Activated CD4-positive, alpha-beta memory T cell treated with anti-CD3 and anti-CD28 coated beads, Interleukin-2, amount 10 ng/mL, durations not matched to agents 7 days and 5 days (primary cell): ENCODE measurements at regions of chr1 and their contacts with region 1.

Region 1: GRCh38 chr1:156728597-156729462 is at the start of gene ISG20L2:
- DNase-seq: peak; percentile 98
- H3K4me3 Mint-ChIP-seq: no peak within 1 kb of the TSS
- H3K27ac Mint-ChIP-seq: no peak within 1 kb of the TSS
- H3K4me1 Mint-ChIP-seq: peaks cover 24% of the 10 kb centered on the region
- H3K27me3 Mint-ChIP-seq: no peaks in the 10 kb centered on the region
- total RNA-seq, gene ISG20L2: 42.0 to 43.3 TPM

Region 2: DNA sequence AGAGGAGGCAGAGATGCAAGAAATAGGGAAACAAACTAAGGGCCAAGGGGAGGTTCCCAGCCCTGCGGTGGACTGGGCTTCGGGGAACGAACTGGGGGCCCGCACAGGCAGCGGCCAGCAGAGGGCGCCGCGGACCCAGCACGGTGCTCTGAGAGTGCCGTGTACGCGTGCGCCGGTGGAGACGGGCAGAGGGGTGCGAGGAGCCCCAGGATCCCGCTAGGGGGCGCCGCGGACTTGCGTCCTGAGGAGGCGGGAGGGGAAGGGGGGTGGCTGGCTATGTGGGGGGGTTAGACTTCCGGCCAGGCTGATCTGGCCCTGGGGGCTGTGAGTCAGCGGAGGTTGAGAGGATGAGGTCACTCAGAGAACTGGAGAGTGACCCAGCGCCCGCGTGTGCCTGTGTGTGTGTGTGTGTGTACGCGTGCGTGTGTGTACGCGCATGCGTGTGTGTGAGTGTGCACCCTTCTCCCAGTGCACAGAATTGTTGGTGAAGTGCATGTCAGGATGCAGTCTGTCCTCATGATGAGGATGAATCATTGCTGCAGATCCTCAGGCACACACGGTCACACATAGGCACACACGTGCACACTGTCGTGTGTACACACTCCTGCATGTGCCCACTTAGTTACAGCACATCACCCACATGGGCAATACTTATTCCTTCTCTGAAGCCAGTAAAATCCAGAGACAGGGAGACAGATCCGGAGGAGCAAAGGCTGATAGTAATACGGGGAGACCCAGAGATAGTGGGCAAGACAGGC is 68.7 kb before region 1 on chr1:
- CTCF ChIA-PET with region 1: interaction called, 77 read pairs
- POLR2A ChIA-PET with region 1: interaction called, 17 read pairs
- DNase-seq: peak; percentile 95
- H3K4me3 Mint-ChIP-seq: peak overlapping the region; percentile 83
- H3K27ac Mint-ChIP-seq: peak overlapping the region; percentile 86
- H3K4me1 Mint-ChIP-seq: peaks cover 72% of the 10 kb centered on the region
- H3K27me3 Mint-ChIP-seq: peaks cover 30% of the 10 kb centered on the region

Region 3: DNA sequence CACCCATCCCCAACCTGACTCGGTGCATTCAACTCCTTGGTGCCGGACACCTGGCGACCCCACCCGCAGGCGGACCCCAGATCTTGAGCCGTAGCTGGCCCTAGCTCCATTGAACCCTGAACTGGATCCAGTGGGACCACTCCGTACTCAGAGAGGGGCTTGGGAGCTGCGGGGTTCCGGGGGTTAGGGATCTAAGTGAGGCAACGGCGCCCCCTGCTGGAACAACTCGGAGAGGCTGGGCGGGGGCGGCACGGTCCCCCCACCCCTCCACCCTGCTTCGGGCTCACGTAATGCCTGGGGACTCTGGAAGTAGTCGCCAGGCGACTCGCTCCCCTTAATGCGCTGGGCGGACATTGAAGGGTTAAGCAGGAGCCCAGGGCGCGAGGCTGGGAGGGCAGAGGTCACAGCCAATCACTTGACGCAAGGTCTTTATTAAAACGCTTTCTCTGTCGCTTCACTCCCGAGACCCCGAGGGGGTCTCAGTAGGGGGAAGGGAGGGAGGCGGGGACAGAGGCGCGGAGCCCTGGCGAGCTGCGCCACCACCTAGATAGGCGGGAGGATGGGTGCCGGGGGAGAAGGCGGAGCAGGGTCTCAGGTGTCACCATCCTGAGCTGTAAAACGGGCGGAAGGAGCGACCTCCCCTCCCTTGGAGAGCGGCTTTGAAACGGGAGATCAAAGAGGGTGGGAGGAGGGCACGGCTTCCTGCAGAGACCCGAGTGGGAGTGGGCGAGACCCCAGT is 22.7 kb before region 1 on chr1:
- CTCF ChIA-PET with region 1: interaction called, 34 read pairs
- POLR2A ChIA-PET with region 1: interaction called, 10 read pairs
- DNase-seq: peak; percentile 69
- H3K4me3 Mint-ChIP-seq: peak overlapping the region; percentile 70
- H3K27ac Mint-ChIP-seq: no peak overlapping the region
- H3K4me1 Mint-ChIP-seq: peaks cover 21% of the 10 kb centered on the region
- H3K27me3 Mint-ChIP-seq: peaks cover 38% of the 10 kb centered on the region

Region 4: DNA sequence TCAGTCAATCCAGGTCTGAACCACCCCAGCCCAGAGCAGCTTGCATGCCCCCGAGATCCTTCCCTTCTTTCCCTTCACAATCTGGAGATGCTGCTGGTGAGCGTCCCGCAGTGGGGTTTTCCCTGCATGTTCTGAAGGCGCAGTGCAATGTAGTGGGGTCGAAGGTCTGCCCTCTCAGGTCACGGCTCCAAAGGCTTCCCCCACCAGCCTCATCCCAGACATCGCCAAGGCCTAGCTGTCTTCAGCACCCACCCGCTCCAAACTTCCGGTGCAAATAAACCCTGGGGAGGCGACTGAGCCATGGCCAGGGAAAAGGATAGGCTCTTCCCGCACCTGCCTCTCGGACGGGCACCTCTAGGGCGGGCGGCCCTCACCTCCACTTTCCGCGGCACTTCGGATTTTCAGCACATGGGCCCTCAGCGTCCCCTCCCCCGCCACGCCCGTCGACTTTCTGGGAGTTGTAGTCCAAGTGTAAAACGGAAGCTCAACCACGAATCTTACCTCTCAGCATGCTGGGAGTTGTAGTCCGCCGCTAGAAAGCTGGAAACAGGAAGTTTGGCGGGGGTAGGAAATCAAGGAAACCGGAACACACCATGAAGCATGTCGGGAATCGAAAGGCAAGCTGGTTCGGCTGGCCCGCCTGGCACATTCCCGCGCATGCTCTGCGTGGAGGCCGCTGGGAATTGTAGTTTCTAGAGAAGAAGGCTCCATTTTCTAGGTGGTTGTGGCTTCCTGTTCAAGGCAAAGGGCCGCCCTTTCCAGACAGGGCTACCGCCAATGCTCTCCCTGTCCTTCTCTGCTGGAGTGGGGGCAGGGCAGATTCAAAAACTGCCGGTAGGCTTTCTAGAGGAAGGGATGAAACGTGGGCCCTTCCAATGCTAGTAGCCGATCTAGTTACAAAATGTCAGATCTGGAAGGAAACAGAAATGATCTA is 12.1 kb after region 1 on chr1 and contains the start of gene MRPL24:
- CTCF ChIA-PET with region 1: interaction called, 78 read pairs
- POLR2A ChIA-PET with region 1: interaction called, 150 read pairs
- DNase-seq: peak; percentile 98
- H3K4me3 Mint-ChIP-seq: peak within 1 kb of the TSS; percentile 99
- H3K27ac Mint-ChIP-seq: peak within 1 kb of the TSS; percentile 97
- H3K4me1 Mint-ChIP-seq: peaks cover 66% of the 10 kb centered on the region
- H3K27me3 Mint-ChIP-seq: no peaks in the 10 kb centered on the region
- total RNA-seq, gene MRPL24: 40.3 to 43.8 TPM

Region 5: DNA sequence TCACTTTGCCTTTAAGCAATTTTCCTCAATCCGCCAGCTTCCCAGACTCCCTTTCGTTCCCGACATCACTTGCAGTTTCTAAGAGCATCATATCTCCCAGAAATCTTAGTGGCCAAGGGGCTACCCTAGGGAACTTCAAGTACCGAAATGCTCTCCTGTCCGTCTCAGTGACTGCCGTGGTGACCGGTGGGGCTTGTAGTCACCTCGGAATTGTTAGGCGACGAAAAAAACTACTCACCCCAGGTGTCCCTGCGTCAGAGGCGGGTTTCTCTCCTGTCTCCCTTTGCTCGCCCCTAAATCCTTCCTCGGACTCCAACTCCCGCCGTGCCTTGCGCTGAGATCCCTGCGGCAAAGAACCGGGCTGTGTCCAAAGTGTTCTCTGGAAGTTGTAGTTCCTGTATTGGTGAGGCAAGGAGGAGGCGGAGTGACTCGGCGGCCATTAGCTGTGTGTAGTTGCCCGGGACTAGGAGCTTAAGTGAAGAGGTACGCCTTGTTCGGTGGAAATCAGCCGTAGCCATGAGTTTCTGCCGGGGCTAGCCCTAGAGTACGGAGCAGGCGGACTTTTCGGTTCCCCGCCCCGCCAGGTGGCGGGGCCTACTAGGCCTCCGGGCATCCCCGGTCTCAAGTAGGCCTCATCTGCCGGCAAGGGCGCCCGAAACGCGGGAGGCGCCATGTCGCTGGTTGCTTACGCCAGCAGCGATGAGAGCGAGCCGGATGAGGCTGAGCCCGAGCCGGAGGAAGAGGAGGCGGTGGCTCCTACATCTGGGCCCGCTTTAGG is 38.5 kb after region 1 on chr1 and contains the start of gene PRCC:
- CTCF ChIA-PET with region 1: interaction called, 121 read pairs
- POLR2A ChIA-PET with region 1: interaction called, 72 read pairs
- DNase-seq: peak; percentile 99
- H3K4me3 Mint-ChIP-seq: no peak within 1 kb of the TSS
- H3K27ac Mint-ChIP-seq: no peak within 1 kb of the TSS
- H3K4me1 Mint-ChIP-seq: peaks cover 40% of the 10 kb centered on the region
- H3K27me3 Mint-ChIP-seq: no peaks in the 10 kb centered on the region
- total RNA-seq, gene PRCC: 61.6 to 74.1 TPM

Region 6: DNA sequence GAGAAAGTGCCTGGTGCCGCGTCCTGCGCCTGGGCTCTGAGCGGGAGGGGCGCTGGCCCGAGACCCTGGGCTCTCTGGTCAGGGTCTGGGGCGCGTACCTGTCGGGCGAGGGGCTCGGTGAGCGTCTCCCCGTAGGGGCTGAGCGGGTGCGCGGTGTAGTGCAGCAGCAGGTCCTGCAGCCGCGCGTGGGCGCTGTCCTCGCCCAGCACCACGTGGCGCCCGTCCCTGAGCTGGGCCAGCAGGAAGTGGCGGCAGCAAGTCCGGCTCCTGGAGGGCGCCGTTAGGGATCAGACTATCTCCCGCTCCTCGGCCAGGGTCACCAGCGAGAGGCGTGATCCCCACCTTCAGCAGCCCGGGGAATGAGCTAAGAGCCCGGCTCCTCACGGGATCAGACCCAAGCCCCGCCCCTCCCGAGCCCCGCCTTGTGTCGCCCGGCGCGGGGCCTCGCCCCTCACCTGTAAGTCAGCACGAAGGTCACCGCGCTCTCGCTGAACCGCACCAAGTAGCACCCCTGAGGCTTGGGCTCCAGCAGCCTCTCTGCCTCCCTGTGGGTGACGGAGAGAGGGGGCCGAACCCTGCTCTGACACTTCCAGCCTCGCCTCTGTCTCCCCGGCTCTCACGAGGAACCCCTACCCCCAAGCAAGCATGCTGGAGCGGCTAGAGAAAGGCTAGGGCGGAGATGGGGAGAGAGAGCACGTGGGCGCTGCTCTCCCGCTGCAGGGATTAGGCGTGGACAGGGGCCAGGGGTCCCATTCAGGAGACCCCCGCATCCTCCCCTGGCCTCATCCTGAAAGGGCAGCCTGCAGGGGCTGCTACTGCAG is 85.1 kb after region 1 on chr1:
- CTCF ChIA-PET with region 1: interaction called, 16 read pairs
- POLR2A ChIA-PET with region 1: interaction called, 14 read pairs
- DNase-seq: peak; percentile 75
- H3K4me3 Mint-ChIP-seq: peak overlapping the region; percentile 96
- H3K27ac Mint-ChIP-seq: peak overlapping the region; percentile 100
- H3K4me1 Mint-ChIP-seq: peaks cover 79% of the 10 kb centered on the region
- H3K27me3 Mint-ChIP-seq: no peaks in the 10 kb centered on the region

Region 7: GRCh38 chr1:156892190-156893047 is 163.6 kb after region 1 on chr1:
- CTCF ChIA-PET with region 1: interaction called, 64 read pairs
- POLR2A ChIA-PET with region 1: interaction called, 3 read pairs
- DNase-seq: peak; percentile 87
- H3K4me3 Mint-ChIP-seq: peak overlapping the region; percentile 49
- H3K27ac Mint-ChIP-seq: no peak overlapping the region
- H3K4me1 Mint-ChIP-seq: peaks cover 22% of the 10 kb centered on the region
- H3K27me3 Mint-ChIP-seq: peaks cover 56% of the 10 kb centered on the region

Region 8: DNA sequence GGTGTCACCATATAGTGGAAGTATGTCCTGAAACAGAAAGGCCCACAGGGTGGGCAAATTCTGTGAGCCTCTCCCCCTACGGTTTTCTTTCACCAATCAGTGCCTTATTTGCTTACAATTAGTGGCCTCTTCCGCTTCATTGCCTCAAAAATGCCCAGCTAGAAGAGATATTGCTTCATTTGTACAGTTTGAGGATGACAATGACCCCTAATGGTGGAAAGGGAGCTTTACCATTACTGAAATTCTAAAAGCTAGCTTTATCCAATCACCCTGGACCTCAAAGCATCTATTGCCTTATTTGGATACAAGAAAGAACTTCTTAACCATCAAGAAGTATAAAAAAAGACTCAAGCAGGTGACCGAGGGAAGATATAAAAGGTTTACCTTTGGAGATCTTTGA is 241.2 kb after region 1 on chr1:
- CTCF ChIA-PET with region 1: no interaction called
- POLR2A ChIA-PET with region 1: no interaction called
- DNase-seq: no peak
- H3K4me3 Mint-ChIP-seq: no peak overlapping the region
- H3K27ac Mint-ChIP-seq: no peak overlapping the region
- H3K4me1 Mint-ChIP-seq: no peaks in the 10 kb centered on the region
- H3K27me3 Mint-ChIP-seq: peaks cover 52% of the 10 kb centered on the region